AG04449 (cell line): ENCODE measurements at regions of chr3 and their contacts with region 1.

Region 1: GRCh38 chr3:52056968-52057805 is 816 bp upstream of the DUSP7 start:
- DNase-seq: peak; percentile 86
- H3K4me3 ChIP-seq: peak overlapping the region; percentile 72
- CTCF ChIP-seq: no peak

Region 2: GRCh38 chr3:52022323-52023100 is 34.7 kb before region 1 on chr3:
- CTCF ChIA-PET with region 1: interaction called, 14 read pairs
- POLR2A ChIA-PET with region 1: no interaction called
- DNase-seq: no peak
- H3K4me3 ChIP-seq: no peak overlapping the region
- CTCF ChIP-seq: no peak

Region 3: GRCh38 chr3:52046186-52046913 is 10.8 kb before region 1 on chr3:
- CTCF ChIA-PET with region 1: interaction called, 18 read pairs
- POLR2A ChIA-PET with region 1: interaction called, 31 read pairs
- DNase-seq: peak; percentile 98
- H3K4me3 ChIP-seq: peak overlapping the region; percentile 32; the same call in 1 of the 2 replicates
- CTCF ChIP-seq: no peak

Region 4: DNA sequence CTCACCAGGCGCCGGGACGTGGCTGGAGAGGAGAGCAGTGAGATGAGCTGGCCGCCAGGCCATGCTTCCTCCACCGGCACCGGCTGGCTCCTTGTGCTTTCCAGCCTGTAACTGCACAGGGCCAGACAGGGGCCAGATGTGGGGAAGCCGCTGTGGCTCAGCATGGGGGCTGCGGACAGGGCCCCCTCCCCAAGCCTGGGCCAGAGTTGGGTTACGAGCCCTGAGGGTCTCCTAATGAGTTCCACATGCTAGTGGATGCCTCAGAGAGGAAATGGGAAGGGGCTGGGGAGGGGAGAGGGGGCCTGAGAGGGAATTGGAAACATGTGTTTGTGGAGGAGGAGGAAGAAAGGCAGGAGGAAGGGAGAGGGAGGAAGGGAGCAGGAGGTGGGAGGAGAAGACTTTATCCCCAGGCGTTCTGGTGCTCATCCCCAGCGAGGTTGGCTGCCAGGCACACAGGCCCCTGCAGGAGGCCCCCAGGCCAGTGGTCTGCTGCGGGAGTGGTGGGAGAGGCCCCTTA is 10.9 kb after region 1 on chr3:
- CTCF ChIA-PET with region 1: interaction called, 11 read pairs
- POLR2A ChIA-PET with region 1: interaction called, 4 read pairs
- DNase-seq: no peak
- H3K4me3 ChIP-seq: no peak overlapping the region
- CTCF ChIP-seq: no peak

Region 5: DNA sequence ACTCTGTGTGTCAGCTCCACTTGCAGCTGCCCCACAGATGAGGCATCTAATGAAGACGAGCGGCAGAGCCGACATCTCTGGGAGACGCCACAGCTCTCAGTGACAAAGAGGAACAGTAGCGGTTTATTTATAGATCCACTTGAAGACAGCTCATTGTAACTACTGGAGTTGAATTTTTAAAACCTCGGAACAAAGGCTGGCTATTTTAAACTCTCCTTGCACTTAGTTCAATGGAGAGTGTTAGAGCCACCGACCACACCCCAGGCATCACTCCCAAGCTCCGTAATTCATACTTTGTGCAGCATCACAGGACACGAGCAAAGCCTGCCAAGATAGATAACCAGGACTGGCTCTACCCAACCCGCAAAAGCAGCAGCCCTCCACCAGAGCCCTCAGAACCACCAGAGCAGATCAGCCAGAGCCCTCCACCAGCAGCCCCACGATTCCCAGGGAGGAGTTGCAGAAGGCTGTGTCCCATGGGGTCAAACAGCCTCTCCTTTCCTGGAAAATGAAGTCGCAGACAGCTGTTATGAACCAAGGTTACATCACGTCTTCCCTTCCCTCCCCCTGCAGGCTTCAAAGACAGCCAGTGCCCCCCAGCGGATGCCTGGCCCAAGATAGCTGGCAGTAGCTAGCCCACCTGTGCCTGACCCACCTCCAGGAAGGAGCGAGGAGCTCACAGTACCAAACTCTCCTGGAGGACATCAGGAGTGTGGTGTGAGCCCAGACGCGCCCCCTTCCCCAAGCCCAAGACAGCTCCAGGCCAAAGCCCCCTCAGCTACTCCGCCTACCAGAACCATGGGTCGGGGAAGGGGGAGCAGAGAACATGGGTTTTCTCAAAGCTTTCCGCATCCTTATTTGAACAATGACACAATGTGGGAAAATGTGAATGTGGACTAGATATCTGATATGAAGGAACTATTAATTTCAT is 51.4 kb after region 1 on chr3:
- CTCF ChIA-PET with region 1: interaction called, 21 read pairs
- POLR2A ChIA-PET with region 1: interaction called, 5 read pairs
- DNase-seq: no peak
- H3K4me3 ChIP-seq: 0 out of 2 replicates have a peak overlapping the region, but pooled peaks have one; percentile 0
- CTCF ChIP-seq: peak; percentile 73

Region 6: DNA sequence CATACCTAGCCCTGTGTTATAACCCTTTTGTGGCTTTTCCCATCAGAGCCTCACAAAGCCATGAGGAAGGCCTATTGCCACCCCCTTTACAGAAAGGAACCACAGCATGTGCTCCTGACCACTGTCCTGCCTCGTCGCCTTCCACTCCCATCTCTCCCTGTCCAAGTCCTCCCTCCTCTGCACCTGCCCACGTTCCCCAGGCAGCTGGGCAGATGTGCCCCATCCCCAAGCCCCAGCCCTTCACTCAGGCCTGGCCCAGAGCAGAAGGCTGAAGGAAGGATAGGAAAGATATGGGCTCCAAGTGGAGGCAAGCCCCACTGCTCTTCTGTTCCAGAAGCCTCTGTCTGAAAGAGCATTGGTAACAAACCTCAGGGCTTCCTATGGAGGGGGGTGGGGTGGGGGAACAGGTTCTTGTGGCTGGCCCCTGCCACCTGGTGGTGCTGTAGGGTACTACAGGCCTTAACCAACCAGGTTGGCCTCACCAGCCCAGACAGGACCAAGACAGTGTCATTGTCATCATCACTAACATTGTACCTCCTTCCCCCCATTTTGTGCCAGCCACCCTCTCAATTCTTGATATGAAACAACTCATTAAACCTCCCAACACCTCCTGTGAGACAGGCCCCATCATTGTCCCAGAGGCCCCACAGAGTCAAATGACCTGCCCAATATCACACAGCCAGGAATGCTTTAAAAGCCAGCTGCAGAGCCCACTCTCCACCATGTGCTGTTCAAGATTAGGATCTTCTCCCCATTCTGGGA is 87.0 kb after region 1 on chr3:
- CTCF ChIA-PET with region 1: interaction called, 10 read pairs
- POLR2A ChIA-PET with region 1: no interaction called
- DNase-seq: peak; percentile 41
- H3K4me3 ChIP-seq: no peak overlapping the region
- CTCF ChIP-seq: peak; percentile 95